ENCODE measurements at regions of chr19 and their contacts with region 1.

Region 1: DNA sequence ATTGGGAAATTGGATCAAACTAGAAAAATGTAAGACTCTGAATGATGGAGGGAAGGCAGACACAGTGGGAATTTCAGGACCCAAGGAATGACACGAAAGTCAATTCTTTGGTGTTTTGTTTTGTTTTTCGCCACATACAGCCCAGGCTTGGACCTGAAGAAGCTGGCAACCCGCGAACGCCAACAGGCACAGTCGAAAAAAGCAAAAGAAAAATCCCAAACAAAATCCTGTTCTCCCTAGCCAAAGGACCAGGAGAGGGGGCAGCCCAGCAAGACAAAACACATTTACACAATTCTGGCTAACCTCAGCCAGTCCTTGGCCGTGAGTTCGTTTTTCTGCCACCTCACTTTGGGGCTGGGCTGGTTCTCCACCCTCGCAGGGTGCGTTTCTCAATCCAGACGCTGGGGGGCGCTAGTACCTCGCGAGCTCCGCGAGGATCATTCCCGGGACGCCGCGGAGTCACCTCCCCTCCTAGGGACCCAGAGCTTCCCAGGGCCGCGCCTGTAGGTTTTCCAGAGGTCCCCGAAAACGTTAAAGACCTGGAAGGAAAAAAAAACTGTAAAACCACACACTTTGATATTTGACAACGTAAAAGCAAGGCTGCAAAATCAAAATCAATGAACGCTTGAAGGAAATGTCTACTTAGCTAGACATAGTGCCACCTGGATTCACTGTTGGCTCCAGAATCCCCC is 34.9 kb upstream of the TPM4 start:
- DNase-seq: no peak
- H3K4me3 ChIP-seq: no peak overlapping the region
- H3K27me3 ChIP-seq: no peaks in the 10 kb centered on the region
- CTCF ChIP-seq: peak; percentile 98

Region 2: DNA sequence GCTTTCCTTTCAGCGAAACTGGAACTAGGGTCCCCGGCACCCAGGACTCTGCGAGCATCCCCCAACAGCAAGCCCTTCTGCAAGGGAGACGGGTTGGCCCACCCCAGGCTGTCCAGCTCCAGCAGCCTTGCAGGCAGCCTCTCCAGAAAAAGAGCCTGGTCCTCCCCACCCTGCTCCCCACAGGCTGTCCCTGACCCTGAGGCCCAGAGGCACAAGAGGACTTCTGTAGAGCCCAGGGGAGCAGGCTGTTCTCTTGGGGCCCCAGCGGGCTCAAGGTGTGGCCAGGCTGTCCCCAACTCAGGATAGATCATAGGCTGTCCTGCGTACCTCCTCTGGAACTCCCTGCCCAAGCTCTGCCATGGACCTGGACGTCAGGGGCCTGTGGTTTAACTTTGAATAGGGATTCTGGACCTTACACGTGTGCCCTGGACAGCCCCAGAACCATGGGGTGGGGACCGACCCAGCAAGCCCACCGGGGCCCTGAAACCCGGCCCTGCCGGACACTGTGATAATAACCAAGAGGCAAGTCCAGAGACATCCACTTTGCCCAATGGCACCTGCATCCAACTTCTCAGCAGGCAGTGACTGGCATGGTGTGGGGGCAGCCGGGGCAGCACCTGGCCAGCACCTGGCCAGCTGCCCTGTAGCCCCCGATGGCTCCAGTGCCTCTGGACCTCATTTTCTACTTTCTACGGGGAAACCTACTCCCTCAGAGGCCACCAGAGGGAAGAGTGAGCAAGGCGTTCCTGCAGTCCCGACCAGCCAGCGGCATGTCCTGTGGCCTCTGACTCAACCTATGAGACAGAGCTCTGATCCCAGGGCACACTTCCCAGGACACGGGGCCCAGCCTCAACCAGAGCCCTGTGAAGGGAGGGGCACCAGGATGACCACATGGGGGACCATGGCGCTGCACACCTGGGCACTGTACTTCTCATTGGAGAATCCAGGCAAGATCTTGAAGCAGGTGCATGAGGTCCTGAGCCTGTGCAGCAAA is 16.0 kb before region 1 on chr19:
- CTCF ChIA-PET with region 1: interaction called, 33 read pairs
- POLR2A ChIA-PET with region 1: no interaction called
- DNase-seq: peak; percentile 16
- H3K4me3 ChIP-seq: no peak overlapping the region
- H3K27me3 ChIP-seq: peaks cover 2% of the 10 kb centered on the region; the same call in 1 of the 2 replicates
- CTCF ChIP-seq: peak; percentile 75

Region 3: GRCh38 chr19:16062789-16063188 is 21.3 kb after region 1 on chr19:
- CTCF ChIA-PET with region 1: interaction called, 34 read pairs
- POLR2A ChIA-PET with region 1: interaction called, 4 read pairs
- DNase-seq: no peak
- H3K4me3 ChIP-seq: no peak overlapping the region
- H3K27me3 ChIP-seq: no peaks in the 10 kb centered on the region
- CTCF ChIP-seq: peak; percentile 94

Region 4: DNA sequence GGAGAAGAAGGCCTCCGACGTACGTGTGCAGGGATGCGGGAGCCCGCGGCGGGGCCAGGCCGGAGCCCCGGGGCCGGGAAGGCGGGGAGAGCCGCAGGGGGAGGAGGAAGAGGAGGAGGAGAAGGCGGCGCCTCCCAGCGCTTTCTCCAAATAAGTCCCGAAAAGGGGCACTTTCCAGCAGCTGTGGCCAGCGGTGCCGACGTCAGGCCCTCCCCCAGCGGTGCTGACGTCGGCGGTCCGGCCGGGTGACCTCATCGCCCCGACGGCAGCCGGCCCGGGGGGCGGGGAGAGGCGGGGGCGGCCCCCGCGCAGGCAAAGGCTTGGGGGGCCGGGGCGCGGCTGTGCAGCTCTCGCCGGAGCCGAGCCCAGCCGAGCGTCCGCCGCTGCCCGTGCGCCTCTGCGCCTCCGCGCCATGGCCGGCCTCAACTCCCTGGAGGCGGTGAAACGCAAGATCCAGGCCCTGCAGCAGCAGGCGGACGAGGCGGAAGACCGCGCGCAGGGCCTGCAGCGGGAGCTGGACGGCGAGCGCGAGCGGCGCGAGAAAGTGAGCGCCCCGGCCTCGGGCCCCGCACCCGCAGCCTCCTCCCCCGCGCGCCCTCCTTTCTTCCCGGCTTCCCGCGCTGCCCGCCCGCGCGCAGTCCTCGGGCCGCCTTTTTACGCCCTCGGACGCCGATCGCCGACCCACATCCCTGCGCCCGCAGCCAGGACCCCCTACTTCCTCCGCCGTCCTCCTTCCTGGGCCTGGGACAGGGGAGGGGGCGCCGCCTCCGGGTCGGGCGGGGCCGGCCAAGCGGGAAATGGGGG is 34.9 kb after region 1 on chr19 and contains the start of gene TPM4:
- CTCF ChIA-PET with region 1: interaction called, 16 read pairs
- POLR2A ChIA-PET with region 1: interaction called, 9 read pairs
- DNase-seq: peak; percentile 72
- H3K4me3 ChIP-seq: peak within 1 kb of the TSS; percentile 95
- H3K27me3 ChIP-seq: no peaks in the 10 kb centered on the region
- CTCF ChIP-seq: no peak
- polyA plus RNA-seq, gene TPM4: 942 and 1,247 TPM in 2 replicates

Region 5: GRCh38 chr19:16111160-16111908 is 69.9 kb after region 1 on chr19 and contains the start of gene RAB8A:
- CTCF ChIA-PET with region 1: interaction called, 42 read pairs
- POLR2A ChIA-PET with region 1: no interaction called
- DNase-seq: peak; percentile 95
- H3K4me3 ChIP-seq: peak within 1 kb of the TSS; percentile 83
- H3K27me3 ChIP-seq: no peaks in the 10 kb centered on the region
- CTCF ChIP-seq: peak; percentile 82
- polyA plus RNA-seq, gene RAB8A: 78.6 and 106 TPM in 2 replicates

Region 6: GRCh38 chr19:16136185-16136999 is 94.9 kb after region 1 on chr19:
- CTCF ChIA-PET with region 1: no interaction called
- POLR2A ChIA-PET with region 1: no interaction called
- DNase-seq: no peak
- H3K4me3 ChIP-seq: no peak overlapping the region
- H3K27me3 ChIP-seq: no peaks in the 10 kb centered on the region
- CTCF ChIP-seq: no peak

Region 7: GRCh38 chr19:16185123-16185767 is 143.8 kb after region 1 on chr19 and contains the start of gene FAM32A:
- CTCF ChIA-PET with region 1: interaction called, 61 read pairs
- POLR2A ChIA-PET with region 1: no interaction called
- DNase-seq: peak; percentile 96
- H3K4me3 ChIP-seq: peak within 1 kb of the TSS; percentile 55
- H3K27me3 ChIP-seq: no peaks in the 10 kb centered on the region
- CTCF ChIP-seq: peak; percentile 25; the same call in 1 of the 2 replicates
- polyA plus RNA-seq, gene FAM32A: 140 and 156 TPM in 2 replicates

Region 8: GRCh38 chr19:16197622-16198369 is 156.4 kb after region 1 on chr19 and contains the start of gene AP1M1:
- CTCF ChIA-PET with region 1: interaction called, 11 read pairs
- POLR2A ChIA-PET with region 1: no interaction called
- DNase-seq: peak; percentile 93
- H3K4me3 ChIP-seq: peak within 1 kb of the TSS; percentile 100
- H3K27me3 ChIP-seq: no peaks in the 10 kb centered on the region
- CTCF ChIP-seq: no peak
- polyA plus RNA-seq, gene AP1M1: 50.9 and 72.1 TPM in 2 replicates

Measured in BJ (cell line).